PC-9 (cell line): ENCODE measurements at regions of chr5 and their contacts with region 1.

Region 1: GRCh38 chr5:130529511-130530485 is 625.5 kb downstream of the CHSY3 start:
- DNase-seq: peak in 1 of 2 experiments; percentile 44
- H3K4me3 ChIP-seq: no peak overlapping the region
- H3K27ac ChIP-seq: no peak overlapping the region
- H3K4me1 ChIP-seq: 0 out of 2 replicates have a peak, but pooled peaks cover 8% of the 10 kb centered on the region
- H3K27me3 ChIP-seq: no peaks in the 10 kb centered on the region
- CTCF ChIP-seq: no peak

Region 2: DNA sequence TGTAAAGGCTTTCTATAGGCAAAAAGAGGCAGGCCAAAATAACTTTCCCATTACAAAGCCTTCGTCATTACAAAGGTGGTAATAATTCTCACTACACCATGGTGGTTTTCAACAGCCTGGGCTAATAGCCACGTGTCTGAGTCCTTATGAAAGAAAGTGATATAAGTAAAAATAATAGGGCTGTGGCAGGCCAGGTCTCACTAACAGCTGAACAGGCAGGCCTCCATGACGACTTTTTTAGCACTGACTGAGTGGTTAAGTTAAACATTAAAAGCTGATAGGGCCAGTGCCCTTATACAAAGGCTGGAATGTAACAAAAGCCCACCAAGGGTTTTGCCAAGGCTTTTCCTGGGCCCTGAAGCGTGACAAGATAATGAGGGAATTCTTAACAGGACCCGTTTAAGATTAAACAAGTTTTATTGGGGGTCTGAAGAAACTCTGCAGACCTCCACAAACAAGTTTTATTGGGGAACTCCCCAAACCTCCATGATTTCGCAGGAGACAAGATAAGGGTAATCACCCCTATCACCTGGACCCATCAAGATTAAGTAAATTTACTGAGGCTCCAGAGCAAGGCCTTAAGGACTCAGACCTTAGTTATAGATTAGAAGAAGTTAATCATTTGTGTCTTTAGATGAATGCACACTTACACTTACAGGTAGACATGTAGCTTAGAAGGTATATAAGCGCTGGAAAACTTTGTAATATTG is 212.7 kb before region 1 on chr5:
- CTCF ChIA-PET with region 1: no interaction called
- POLR2A ChIA-PET with region 1: interaction called, 10 read pairs
- intact Hi-C with region 1: no loop called
- DNase-seq: no peak
- H3K4me3 ChIP-seq: no peak overlapping the region
- H3K27ac ChIP-seq: no peak overlapping the region
- H3K4me1 ChIP-seq: no peaks in the 10 kb centered on the region
- H3K27me3 ChIP-seq: no peaks in the 10 kb centered on the region
- CTCF ChIP-seq: no peak

Region 3: GRCh38 chr5:130455175-130455574 is 74.6 kb before region 1 on chr5:
- CTCF ChIA-PET with region 1: no interaction called
- POLR2A ChIA-PET with region 1: no interaction called
- intact Hi-C with region 1: no loop called
- DNase-seq: no peak
- H3K4me3 ChIP-seq: no peak overlapping the region
- H3K27ac ChIP-seq: no peak overlapping the region
- H3K4me1 ChIP-seq: no peaks in the 10 kb centered on the region
- H3K27me3 ChIP-seq: no peaks in the 10 kb centered on the region
- CTCF ChIP-seq: no peak